ENCODE measurements at regions of chr17 and their contacts with region 1.

Region 1: GRCh38 chr17:55219934-55220333 is 44.8 kb upstream of the HLF start:
- DNase-seq: no peak
- H3K4me3 ChIP-seq: no peak overlapping the region
- H3K27ac ChIP-seq: no peak overlapping the region
- H3K4me1 ChIP-seq: no peaks in the 10 kb centered on the region
- H3K27me3 ChIP-seq: no peaks in the 10 kb centered on the region
- CTCF ChIP-seq: no peak

Region 2: DNA sequence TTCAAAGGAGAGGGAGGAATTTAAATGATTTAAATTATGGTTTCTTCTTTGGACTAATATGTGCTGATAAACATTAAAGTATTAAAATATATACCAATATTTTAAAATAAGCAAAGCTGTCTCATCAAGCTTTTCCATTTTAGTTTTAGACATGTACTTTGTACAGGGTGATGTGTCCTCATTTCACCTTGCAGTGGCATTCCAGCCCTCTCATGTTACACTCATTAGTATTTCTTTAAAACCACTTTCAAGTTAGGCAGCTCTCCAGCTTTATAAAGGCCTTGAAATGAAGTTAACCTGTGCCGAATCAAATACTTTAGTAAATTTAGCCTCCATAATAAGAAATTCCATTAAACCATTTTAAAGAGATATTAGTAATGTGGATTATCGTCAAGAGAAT is 62.8 kb before region 1 on chr17:
- intact Hi-C with region 1: loop called (anchors 10 kb)
- DNase-seq: no peak
- H3K4me3 ChIP-seq: no peak overlapping the region
- H3K27ac ChIP-seq: no peak overlapping the region
- H3K4me1 ChIP-seq: no peaks in the 10 kb centered on the region
- H3K27me3 ChIP-seq: no peaks in the 10 kb centered on the region
- CTCF ChIP-seq: no peak

Region 3: DNA sequence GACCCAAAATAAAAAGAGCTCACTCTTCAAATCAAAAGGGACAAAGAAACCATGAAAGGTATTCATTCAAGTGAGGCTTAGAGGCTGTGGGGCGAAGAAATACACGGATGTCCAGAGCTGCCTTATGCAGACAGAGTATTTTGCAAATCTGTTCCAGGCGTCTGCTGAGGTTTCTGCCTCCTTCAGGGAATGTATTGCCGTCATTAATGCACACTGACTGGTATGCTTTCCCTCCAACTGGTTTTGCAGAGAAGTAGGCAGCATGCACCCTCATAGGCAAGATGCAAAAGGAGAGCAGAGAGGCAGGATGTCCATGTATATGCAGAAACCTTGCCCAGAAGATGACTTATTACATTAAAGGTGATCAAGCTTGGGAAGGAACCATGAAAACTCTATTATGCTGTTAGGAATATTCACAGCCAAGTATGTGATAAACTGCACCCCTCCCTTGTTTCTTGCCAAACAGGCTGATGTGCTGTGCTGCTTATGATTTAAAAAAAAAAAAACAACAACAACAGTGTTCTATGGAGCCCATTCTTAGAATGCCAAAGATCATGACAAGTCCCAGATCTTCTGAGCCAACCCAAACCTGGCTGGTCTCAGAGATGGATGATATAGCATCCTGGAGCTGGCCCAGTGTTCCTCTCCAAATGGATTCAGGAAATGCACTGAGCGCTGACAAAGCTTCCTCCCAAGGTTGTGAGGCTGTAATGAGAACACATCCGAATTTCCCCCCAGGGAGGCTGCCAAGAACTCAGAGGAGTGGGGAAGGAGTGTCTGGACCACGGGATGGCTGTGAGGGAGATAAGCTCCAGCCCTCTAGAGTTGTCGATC is 32.8 kb before region 1 on chr17:
- intact Hi-C with region 1: no loop called
- DNase-seq: no peak
- H3K4me3 ChIP-seq: no peak overlapping the region
- H3K27ac ChIP-seq: no peak overlapping the region
- H3K4me1 ChIP-seq: no peaks in the 10 kb centered on the region
- H3K27me3 ChIP-seq: no peaks in the 10 kb centered on the region
- CTCF ChIP-seq: no peak

Region 4: GRCh38 chr17:55320594-55321426 is 100.9 kb after region 1 on chr17:
- intact Hi-C with region 1: loop called (anchors 10 kb)
- DNase-seq: no peak
- H3K4me3 ChIP-seq: no peak overlapping the region
- H3K27ac ChIP-seq: no peak overlapping the region
- H3K4me1 ChIP-seq: no peaks in the 10 kb centered on the region
- H3K27me3 ChIP-seq: no peaks in the 10 kb centered on the region
- CTCF ChIP-seq: no peak

Measured in tibial artery (tissue), 4 donors.